ENCODE measurements at regions of chr2 and their contacts with region 1.

Region 1: GRCh38 chr2:85707304-85707703 is 13.1 kb downstream of the GNLY start:
- DNase-seq: peak; percentile 80
- H3K4me3 ChIP-seq: no peak overlapping the region
- H3K27ac ChIP-seq: no peak overlapping the region
- H3K4me1 ChIP-seq: no peaks in the 10 kb centered on the region
- H3K27me3 ChIP-seq: no peaks in the 10 kb centered on the region
- CTCF ChIP-seq: peak; percentile 84

Region 2: DNA sequence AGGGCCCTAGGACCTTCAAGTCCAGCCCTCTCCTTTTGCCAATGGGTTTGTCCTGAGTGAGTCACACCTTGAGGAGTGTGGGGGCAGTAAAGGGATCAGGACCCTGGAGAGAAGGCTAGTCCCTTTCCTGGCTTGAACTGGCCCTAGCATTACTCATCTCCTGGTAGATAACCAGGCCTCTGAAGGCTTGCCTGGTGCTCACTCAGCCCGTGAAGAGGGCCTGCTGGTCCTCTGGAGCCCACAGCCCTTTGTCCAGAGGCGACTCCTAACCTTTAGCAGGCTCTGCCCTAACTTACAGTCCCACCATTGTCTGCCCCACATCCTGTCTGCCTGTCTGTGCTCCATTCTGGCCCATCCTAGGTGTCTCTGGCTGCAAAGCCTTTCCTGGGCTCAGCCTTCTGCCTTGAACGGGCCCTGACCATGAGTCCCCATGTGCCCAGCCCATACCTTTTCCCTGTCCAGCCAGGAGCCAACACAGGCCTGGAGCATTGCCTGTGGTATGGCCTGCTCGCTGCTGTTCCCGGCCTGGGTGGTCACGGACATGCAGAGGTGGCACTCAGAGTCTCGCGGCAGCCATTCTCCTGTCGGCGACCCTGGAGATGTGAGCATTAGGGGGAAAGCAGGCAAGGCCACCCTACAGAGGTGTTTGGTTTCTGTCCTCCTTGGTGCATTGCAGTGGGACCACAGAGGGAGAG is 44.3 kb before region 1 on chr2:
- intact Hi-C with region 1: no loop called
- DNase-seq: no peak
- H3K4me3 ChIP-seq: no peak overlapping the region
- H3K27ac ChIP-seq: no peak overlapping the region
- H3K4me1 ChIP-seq: no peaks in the 10 kb centered on the region
- H3K27me3 ChIP-seq: no peaks in the 10 kb centered on the region
- CTCF ChIP-seq: no peak

Region 3: DNA sequence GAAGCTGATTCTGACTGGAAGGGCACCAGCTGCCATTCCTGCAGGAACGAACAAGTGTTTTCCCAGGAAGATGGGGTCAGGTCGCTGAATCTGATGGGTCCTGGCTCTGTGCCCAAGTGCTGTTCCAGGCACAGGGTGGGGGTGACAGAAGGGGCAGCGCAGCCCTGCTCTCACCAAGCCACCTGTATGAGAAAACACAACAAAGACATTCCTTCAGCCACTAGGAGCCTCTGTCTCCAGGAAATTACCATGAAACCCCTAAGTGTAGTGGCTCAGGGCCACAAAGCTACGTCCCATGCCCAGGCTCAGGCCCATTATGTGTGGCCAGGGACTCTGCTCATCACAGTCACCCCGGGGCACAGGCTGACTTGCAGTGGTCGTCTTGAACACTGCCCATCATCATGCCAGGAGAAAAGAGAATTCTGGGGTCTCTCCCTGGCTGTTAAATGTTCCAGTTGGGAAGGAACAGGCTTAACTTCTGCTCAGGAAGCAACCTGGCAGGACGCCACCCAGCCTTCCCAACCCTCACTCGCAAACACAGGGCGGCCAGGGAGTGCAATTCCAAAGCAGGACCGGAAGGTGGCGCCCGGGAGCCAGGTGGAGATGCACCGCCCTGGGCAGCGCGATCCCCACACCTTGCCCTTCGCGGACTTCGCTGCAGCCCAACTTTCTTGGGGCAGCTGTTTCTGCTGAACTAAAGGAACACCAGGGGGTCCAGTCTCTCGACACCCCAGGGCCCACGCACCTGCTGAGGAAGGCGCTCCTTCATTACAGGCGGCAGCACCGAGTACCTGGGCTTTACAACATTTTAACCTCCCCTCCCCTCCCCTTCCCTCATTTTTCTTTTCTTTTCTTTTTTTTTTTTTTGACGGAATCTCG is 28.3 kb before region 1 on chr2:
- intact Hi-C with region 1: loop called (anchors 1 kb)
- DNase-seq: peak; percentile 89
- H3K4me3 ChIP-seq: no peak overlapping the region
- H3K27ac ChIP-seq: no peak overlapping the region
- H3K4me1 ChIP-seq: no peaks in the 10 kb centered on the region
- H3K27me3 ChIP-seq: no peaks in the 10 kb centered on the region
- CTCF ChIP-seq: peak; percentile 98

Measured in colonic mucosa (tissue), 4 donors.